ENCODE measurements at regions of chr2 and their contacts with region 1.

Region 1: GRCh38 chr2:9373077-9373875 is 50.1 kb downstream of the ITGB1BP1 start:
- DNase-seq: no peak
- ATAC-seq: no peak
- H3K4me3 Mint-ChIP-seq: no peak overlapping the region
- H3K27ac Mint-ChIP-seq: no peak overlapping the region
- H3K4me1 Mint-ChIP-seq: no peaks in the 10 kb centered on the region
- H3K27me3 Mint-ChIP-seq: peaks cover 4% of the 10 kb centered on the region
- CTCF ChIP-seq: no peak

Region 2: GRCh38 chr2:8805278-8806210 is 567.7 kb before region 1 on chr2:
- CTCF ChIA-PET with region 1: no interaction called
- POLR2A ChIA-PET with region 1: no interaction called
- intact Hi-C with region 1: loop called (anchors 5 kb)
- DNase-seq: no peak
- ATAC-seq: no peak
- H3K4me3 Mint-ChIP-seq: no peak overlapping the region
- H3K27ac Mint-ChIP-seq: peak overlapping the region; percentile 44
- H3K4me1 Mint-ChIP-seq: peaks cover 19% of the 10 kb centered on the region
- H3K27me3 Mint-ChIP-seq: no peaks in the 10 kb centered on the region
- CTCF ChIP-seq: no peak

Region 3: DNA sequence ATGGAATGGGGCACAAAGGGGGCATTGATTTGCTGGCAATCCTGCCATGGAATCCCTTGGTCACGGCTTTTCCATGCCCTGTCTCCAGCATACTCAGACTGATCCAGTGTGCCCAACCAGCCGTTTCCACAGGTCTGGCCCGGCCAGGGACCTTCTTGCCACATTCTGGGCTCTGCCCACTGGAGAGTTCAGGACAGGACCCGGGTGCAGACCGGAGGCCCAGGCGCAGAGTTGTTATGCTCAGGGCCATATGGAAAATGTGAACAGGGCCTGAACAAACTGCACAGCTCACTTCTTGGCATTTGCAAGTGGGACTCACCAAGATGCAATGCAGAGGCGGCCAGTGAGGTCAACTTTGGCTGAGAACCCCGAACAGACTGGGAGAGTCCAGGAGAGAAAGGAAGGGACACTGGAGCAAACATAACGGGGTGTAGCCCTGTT is 182.2 kb before region 1 on chr2:
- CTCF ChIA-PET with region 1: no interaction called
- POLR2A ChIA-PET with region 1: no interaction called
- intact Hi-C with region 1: no loop called
- DNase-seq: no peak
- ATAC-seq: no peak
- H3K4me3 Mint-ChIP-seq: no peak overlapping the region
- H3K27ac Mint-ChIP-seq: no peak overlapping the region
- H3K4me1 Mint-ChIP-seq: no peaks in the 10 kb centered on the region
- H3K27me3 Mint-ChIP-seq: peaks cover 2% of the 10 kb centered on the region
- CTCF ChIP-seq: no peak

Measured in activated CD8-positive, alpha-beta T cell treated with anti-CD3 and anti-CD28 coated beads for 36 hours (primary cell).